Natural killer cell (primary cell): ENCODE measurements at regions of chr1 and their contacts with region 1.

Region 1: DNA sequence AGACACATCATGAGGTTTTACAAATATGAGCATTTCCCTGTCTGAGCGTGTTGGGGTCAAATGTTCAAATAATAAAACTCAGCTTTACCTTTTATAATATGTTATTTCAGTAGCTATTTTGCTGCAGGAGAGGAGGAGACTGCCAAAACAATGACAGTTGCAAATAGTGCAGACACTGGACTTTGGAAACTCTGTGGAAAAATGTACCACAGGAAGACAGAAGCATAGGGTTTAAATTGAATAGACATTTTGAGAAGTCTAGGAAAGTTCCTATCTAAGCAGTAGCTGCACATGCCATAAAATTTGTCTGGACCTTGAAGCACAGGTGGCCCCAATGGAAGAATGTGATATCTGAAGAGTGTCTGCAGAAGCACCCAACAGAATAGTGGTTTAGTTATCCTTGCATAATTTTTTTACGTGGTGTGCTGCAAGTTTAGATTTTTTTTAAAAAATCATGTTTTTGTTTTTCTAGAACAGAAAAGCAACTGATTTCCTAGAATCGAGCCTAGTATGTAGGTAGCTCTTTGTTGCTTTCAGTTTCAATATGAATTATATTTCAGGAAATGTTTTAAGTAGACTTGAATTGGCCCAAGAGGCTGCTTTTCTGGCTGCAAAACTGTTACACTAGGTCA is 14.0 kb upstream of the GBP5 start:
- DNase-seq: peak in 1 of 2 donors; percentile 56
- ATAC-seq: peak; percentile 60 to 68 (median 65)
- H3K4me3 ChIP-seq: no peak overlapping the region
- H3K4me3 Mint-ChIP-seq: peak overlapping the region; percentile 60
- H3K27ac ChIP-seq: peak overlapping the region; percentile 79
- H3K27ac Mint-ChIP-seq: peak overlapping the region; percentile 85 to 94
- H3K4me1 ChIP-seq: peaks cover 40% of the 10 kb centered on the region
- H3K4me1 Mint-ChIP-seq: peaks cover 54 to 64% of the 10 kb centered on the region in 2 donors
- H3K27me3 ChIP-seq: no peaks in the 10 kb centered on the region
- H3K27me3 Mint-ChIP-seq: no peaks in the 10 kb centered on the region
- CTCF ChIP-seq: no peak

Region 2: DNA sequence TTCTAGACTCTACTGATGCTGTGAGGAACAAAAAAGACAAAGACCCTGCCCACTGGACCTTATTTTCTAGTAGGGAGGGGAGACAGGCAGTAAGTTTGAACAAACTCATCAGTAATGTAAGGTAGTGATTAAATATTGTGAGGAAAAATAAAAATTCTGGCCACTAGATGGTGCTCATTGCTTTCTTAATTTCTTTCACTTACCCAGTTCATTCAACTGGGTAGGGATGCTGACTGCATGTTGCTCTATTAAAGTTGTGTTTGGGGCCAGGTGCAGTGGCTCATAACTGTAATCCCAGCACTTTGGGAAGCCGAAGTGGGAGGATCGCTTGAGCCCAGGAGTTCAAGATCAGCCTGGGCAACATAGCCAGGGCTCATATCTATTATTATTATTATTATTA is 287.9 kb before region 1 on chr1:
- intact Hi-C with region 1: loop called (anchors 5 kb)
- DNase-seq: peak in 1 of 2 donors; percentile 87
- ATAC-seq: peak; percentile 81 to 90 (median 89)
- H3K4me3 ChIP-seq: no peak overlapping the region
- H3K4me3 Mint-ChIP-seq: no peak overlapping the region
- H3K27ac ChIP-seq: no peak overlapping the region
- H3K27ac Mint-ChIP-seq: no peak overlapping the region
- H3K4me1 ChIP-seq: peaks cover 1% of the 10 kb centered on the region
- H3K4me1 Mint-ChIP-seq: peaks cover 18 to 19% of the 10 kb centered on the region in 2 donors
- H3K27me3 ChIP-seq: no peaks in the 10 kb centered on the region
- H3K27me3 Mint-ChIP-seq: no peaks in the 10 kb centered on the region
- CTCF ChIP-seq: peak; percentile 69

Region 3: GRCh38 chr1:89261926-89262515 is 24.6 kb before region 1 on chr1:
- intact Hi-C with region 1: loop called (anchors 2 kb)
- DNase-seq: no peak
- ATAC-seq: no peak
- H3K4me3 ChIP-seq: no peak overlapping the region
- H3K4me3 Mint-ChIP-seq: peak overlapping the region; percentile 69
- H3K27ac ChIP-seq: peak overlapping the region; percentile 34
- H3K27ac Mint-ChIP-seq: peak overlapping the region; percentile 81 to 94
- H3K4me1 ChIP-seq: peaks cover 41% of the 10 kb centered on the region
- H3K4me1 Mint-ChIP-seq: peaks cover 80 to 82% of the 10 kb centered on the region in 2 donors
- H3K27me3 ChIP-seq: no peaks in the 10 kb centered on the region
- H3K27me3 Mint-ChIP-seq: no peaks in the 10 kb centered on the region
- CTCF ChIP-seq: no peak

Region 4: DNA sequence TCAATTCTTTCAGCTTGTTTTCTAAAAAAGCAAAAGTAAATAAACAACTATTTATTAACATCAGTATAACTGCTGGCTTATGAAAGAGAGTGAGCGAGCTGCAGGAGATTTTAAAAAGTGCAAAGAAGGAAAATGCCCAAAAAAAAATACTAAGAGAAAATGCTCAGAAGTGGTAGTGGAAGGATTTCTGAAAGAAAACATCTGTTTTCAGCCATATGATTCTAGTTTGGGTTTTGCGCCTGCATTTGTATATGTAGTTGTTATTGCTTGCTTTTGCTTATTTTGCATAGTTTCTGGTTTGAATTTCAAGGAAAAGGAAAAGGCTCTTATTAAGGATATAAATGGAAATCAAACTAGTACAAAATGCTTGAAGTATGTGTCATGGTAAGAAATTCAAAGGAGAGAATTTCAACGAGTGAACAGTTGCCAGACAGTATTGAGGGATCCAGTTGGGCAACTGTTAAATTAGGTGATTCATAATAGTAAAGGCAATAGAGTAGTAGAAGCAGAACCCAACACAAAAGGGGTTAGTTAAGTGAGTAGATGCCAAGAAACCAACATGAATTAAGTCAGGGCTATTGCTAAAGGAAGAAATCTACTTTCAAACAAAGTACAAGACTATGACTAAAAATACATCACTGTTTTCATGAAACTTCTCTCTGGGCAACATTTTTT is 15.2 kb before region 1 on chr1:
- intact Hi-C with region 1: loop called (anchors 1 kb)
- DNase-seq: no peak
- ATAC-seq: peak in 2 of 3 donors; percentile 36 to 41
- H3K4me3 ChIP-seq: peak overlapping the region; percentile 56
- H3K4me3 Mint-ChIP-seq: peak overlapping the region; percentile 96
- H3K27ac ChIP-seq: peak overlapping the region; percentile 59
- H3K27ac Mint-ChIP-seq: peak overlapping the region; percentile 98
- H3K4me1 ChIP-seq: peaks cover 24% of the 10 kb centered on the region
- H3K4me1 Mint-ChIP-seq: peaks cover 76 to 79% of the 10 kb centered on the region in 2 donors
- H3K27me3 ChIP-seq: no peaks in the 10 kb centered on the region
- H3K27me3 Mint-ChIP-seq: no peaks in the 10 kb centered on the region
- CTCF ChIP-seq: no peak

Region 5: DNA sequence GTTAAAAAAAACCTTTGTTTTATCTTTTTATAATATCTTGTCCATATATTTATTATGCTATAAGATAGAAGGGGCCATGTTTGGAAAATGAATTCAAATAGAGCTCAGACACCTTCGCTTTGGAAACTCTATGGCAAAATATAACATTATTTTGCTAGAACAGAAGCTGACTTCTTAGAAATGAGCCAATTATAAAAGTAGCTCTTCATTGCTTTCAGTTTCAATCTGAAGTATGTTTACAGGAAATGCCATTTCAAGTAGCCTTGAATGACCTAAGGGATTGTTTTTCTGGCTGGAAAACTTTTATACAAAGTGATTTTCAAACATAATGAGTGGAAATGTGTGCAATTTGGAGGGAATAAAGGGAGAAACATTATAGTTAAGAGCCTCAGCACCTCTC is 23.8 kb after region 1 on chr1:
- intact Hi-C with region 1: loop called (anchors 1 kb)
- DNase-seq: peak in 1 of 2 donors; percentile 47
- ATAC-seq: peak; percentile 80 to 85 (median 84)
- H3K4me3 ChIP-seq: no peak overlapping the region
- H3K4me3 Mint-ChIP-seq: peak overlapping the region; percentile 73
- H3K27ac ChIP-seq: peak overlapping the region; percentile 79
- H3K27ac Mint-ChIP-seq: peak overlapping the region; percentile 91 to 98
- H3K4me1 ChIP-seq: peaks cover 22% of the 10 kb centered on the region
- H3K4me1 Mint-ChIP-seq: peaks cover 40 to 45% of the 10 kb centered on the region in 2 donors
- H3K27me3 ChIP-seq: no peaks in the 10 kb centered on the region
- H3K27me3 Mint-ChIP-seq: no peaks in the 10 kb centered on the region
- CTCF ChIP-seq: no peak